Right lobe of liver (tissue), 6 donors: ENCODE measurements at regions of chr4 and their contacts with region 1.

Region 1: DNA sequence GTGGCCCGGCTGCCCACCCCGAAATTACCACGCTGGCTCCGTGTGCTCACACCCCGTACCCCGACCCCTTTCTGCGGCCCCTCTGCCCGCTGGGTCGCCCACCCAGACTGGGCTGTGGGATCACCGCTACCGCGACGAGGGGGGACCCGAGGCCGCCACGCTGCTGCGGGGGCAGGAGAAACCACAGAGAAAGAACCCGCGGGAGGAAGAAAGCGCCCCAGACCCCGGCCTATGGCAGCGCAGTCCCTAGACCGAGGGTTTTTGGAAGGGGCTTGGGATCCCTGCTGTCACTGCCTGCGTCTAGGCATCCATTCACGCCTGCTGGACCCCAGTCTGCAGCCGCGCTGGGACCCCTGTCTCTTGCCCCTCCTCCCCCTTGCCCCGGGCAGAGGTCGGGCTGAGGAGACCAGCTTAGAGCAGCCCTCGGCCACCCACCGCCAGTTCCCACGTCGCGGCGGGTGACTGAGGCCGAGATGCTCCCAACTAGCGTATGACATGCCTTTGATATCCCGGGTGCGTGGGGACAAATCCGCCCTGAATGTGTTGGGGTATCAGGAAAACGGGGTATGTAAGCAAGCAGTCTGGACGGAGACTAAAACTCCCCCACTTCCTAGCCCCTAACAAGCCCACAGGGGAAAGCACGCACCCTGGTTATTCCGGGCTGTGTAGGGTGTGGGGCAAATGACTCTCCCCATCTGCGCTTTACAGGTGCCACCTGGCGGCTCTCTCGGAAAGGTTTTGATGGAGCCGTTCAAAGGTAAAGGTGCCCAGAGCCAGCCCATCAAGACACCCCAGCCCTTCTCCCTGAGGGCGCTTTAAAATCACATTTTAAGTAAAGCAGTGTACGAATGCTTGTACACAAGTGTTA is 862 bp upstream of the INPP4B start:
- DNase-seq: peak in 2 of 3 donors; percentile 31 to 45
- ATAC-seq: peak; percentile 68 to 79 (median 74)
- H3K4me3 ChIP-seq: peak overlapping the region; percentile 32 to 46 (median 43)
- H3K27ac ChIP-seq: no peak overlapping the region
- H3K4me1 ChIP-seq: peaks cover 0 to 18% (median 3%) of the 10 kb centered on the region in 4 donors
- H3K27me3 ChIP-seq: peaks cover 0 to 6% of the 10 kb centered on the region in 2 donors
- CTCF ChIP-seq: peak; percentile 17 to 43 (median 33)
- POLR2A ChIP-seq: no peak

Region 2: GRCh38 chr4:142126890-142127497 is 720.0 kb before region 1 on chr4:
- intact Hi-C with region 1: loop called in 1 of 2 experiments (anchors 10 kb)
- DNase-seq: peak in 1 of 3 donors; percentile 51
- ATAC-seq: peak; percentile 82 to 87 (median 84)
- H3K4me3 ChIP-seq: no peak overlapping the region
- H3K27ac ChIP-seq: no peak overlapping the region
- H3K4me1 ChIP-seq: no peaks in the 10 kb centered on the region
- H3K27me3 ChIP-seq: no peaks in the 10 kb centered on the region
- CTCF ChIP-seq: peak; percentile 76 to 89 (median 86)
- POLR2A ChIP-seq: no peak

Region 3: GRCh38 chr4:142886546-142886945 is 39.6 kb after region 1 on chr4:
- intact Hi-C with region 1: no loop called
- DNase-seq: no peak
- ATAC-seq: no peak
- H3K4me3 ChIP-seq: no peak overlapping the region
- H3K27ac ChIP-seq: no peak overlapping the region
- H3K4me1 ChIP-seq: no peaks in the 10 kb centered on the region
- H3K27me3 ChIP-seq: no peaks in the 10 kb centered on the region
- CTCF ChIP-seq: no peak
- POLR2A ChIP-seq: no peak